ENCODE measurements at regions of chr5 and their contacts with region 1.

Region 1: DNA sequence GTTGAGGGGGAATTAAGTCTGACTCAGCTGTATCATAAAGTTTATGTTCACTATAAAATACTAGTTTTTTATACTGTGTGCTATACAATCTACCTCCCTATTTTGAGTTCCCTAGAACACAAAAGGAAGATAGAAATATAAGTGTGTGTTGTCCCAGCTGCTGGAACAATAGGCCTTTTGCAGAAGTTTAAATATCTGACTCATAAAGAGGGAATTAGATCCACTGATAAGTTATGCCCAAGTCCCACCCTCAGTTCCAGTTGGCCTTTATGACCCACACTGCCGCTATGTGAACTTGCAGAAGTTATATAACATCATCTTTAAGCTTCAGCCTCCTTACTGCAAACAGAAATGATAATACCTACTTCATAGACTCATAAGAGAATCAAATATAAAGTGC is 88.5 kb upstream of the DAB2 start:
- DNase-seq: peak; percentile 89
- ATAC-seq: peak; percentile 86
- H3K4me3 ChIP-seq: no peak overlapping the region
- H3K27ac ChIP-seq: peak overlapping the region; percentile 4; the same call in 1 of the 2 replicates
- H3K4me1 ChIP-seq: peaks cover 39% of the 10 kb centered on the region
- H3K27me3 ChIP-seq: no peaks in the 10 kb centered on the region
- CTCF ChIP-seq: no peak

Region 2: DNA sequence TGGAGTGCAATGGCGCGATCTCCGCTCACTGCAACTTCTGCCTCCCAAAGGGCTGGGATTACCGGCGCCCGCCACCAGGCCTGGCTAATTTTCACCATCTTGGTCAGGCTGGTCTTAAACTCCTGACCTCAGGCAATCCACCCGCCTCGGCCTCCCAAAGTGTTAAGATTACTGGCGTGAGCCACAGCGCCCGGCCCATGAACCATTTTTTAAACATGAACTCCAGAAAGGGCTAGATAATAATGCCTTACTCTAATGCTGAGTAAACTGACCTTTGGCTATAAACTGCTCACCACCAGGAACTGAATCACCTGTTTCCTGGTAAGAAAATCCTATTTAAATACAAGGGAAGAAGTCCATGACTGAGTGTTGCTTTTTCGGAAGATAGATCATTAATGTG is 65.3 kb before region 1 on chr5:
- CTCF ChIA-PET with region 1: interaction called, 3 read pairs
- POLR2A ChIA-PET with region 1: no interaction called
- intact Hi-C with region 1: loop called (anchors 1 kb)
- DNase-seq: peak; percentile 96
- ATAC-seq: peak; percentile 92
- H3K4me3 ChIP-seq: no peak overlapping the region
- H3K27ac ChIP-seq: peak overlapping the region; percentile 92
- H3K4me1 ChIP-seq: peaks cover 44% of the 10 kb centered on the region
- H3K27me3 ChIP-seq: no peaks in the 10 kb centered on the region
- CTCF ChIP-seq: no peak

Region 3: GRCh38 chr5:39608024-39608423 is 94.8 kb after region 1 on chr5:
- CTCF ChIA-PET with region 1: no interaction called
- POLR2A ChIA-PET with region 1: no interaction called
- intact Hi-C with region 1: no loop called
- DNase-seq: no peak
- ATAC-seq: no peak
- H3K4me3 ChIP-seq: no peak overlapping the region
- H3K27ac ChIP-seq: no peak overlapping the region
- H3K4me1 ChIP-seq: peaks cover 24% of the 10 kb centered on the region
- H3K27me3 ChIP-seq: no peaks in the 10 kb centered on the region
- CTCF ChIP-seq: no peak

Measured in PC-3 (cell line).